ENCODE measurements at regions of chr5 and their contacts with region 1.

Region 1: DNA sequence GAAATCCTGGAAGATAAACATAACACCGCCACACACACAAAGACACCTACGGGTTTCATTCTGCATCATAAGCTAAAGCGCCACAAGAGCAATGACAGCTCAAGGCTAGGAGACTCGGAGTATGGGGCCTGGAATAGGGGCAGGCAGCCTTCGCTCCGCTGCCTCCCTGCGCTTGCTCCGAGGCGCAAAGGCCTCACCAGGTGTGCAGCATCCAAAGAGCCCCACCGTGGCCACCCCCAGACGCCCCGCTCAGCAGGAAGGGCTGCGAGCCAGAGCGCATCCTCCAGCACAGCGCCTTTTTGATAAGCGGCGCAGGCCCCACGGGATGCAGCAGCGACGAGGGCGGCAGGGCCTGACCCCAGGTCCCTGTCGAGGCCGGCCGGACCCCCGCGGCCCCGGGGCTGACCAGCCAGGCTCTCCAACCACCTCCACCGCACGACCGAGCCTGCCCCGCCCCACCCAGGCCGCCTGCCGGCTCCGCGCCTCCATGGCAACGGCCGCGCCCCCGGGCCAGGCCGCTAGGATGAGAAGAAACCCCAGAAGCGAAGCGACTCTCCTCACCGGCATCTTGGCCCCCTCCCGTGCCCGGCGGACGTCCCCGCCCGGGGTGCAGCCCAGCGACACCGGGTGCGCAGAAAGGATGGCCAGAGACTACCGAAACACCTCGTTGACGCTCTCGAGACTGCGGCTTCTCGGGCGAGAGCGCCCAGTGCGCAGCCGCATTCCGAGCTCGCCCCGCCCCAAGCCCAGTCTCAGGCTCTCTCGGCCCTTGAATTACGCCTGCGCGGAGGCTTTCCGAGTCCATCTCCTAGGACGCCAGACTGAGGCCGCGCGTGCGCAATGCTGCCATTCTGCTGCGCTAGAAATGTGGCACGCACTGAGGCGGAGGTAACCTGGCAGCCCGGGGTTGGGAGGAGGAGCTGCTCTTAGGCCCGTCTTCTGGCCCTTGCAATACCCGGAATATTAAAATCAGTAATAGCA is at the start of gene KIF3A:
- DNase-seq: peak; percentile 100
- H3K4me3 Mint-ChIP-seq: peak within 1 kb of the TSS; percentile 89
- H3K27ac Mint-ChIP-seq: peak within 1 kb of the TSS; percentile 29
- H3K4me1 Mint-ChIP-seq: peaks cover 38% of the 10 kb centered on the region
- H3K27me3 Mint-ChIP-seq: peaks cover 5% of the 10 kb centered on the region
- CTCF ChIP-seq: no peak
- total RNA-seq, gene KIF3A: 23.9 and 31.5 TPM in 2 replicates

Region 2: DNA sequence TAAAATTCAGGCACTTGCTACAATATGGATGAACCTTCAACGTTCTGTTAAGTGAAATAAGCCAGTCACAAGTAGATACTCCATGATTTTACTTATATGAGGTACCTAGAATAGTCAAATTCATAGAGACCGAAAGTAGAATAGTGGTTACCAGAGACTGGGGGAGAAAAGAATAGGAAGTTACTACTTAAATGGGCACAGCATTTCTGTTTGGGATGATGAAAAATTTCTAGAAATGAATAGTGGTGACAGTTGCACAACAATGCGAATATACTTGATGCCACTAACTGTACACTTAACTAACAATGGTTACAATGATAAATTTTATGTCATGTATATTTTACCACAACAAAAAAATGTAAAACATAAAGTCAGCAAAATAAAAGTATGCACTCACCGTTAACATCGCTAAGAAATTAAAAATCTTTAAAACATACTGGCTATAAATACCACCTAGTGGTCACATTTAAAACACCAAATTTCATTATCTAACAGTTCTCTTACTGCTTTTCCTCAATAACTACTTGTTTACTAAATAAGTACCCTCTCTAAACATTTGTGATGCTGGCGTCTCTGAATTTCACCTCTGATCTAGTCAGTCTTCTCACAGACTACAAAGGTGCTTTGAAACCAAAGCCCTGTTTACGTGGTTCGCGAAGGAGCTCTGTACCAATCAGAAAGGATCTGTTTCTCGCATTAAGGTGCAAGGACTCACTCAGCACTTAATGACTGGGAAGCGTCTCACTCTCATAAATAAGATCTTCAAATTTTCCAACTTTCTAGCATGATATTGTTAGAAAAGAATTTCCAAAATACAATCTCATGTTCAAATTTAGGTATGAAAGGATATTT is 22.5 kb before region 1 on chr5:
- CTCF ChIA-PET with region 1: interaction called, 13 read pairs
- POLR2A ChIA-PET with region 1: interaction called, 3 read pairs
- intact Hi-C with region 1: no loop called
- DNase-seq: no peak
- H3K4me3 Mint-ChIP-seq: no peak overlapping the region
- H3K27ac Mint-ChIP-seq: no peak overlapping the region
- H3K4me1 Mint-ChIP-seq: no peaks in the 10 kb centered on the region
- H3K27me3 Mint-ChIP-seq: no peaks in the 10 kb centered on the region
- CTCF ChIP-seq: peak; percentile 50

Region 3: DNA sequence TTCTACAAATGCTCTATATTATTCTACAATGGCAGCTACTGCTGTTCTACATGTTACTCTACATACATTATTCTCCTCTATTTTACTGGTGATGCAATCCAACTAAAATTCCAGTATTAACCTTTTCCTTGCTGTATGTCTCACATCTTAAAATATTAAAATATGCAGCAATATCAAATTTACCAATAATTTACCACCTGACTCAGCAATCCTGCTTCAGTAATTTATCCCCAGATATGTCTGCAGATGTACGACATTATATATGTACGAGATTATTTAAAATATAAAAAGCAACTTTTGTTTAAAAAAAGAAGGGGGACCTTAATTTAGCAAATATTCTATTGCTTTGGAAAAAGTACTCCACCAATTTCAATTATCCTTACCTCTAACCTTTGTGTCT is 11.4 kb before region 1 on chr5:
- CTCF ChIA-PET with region 1: interaction called, 4 read pairs
- POLR2A ChIA-PET with region 1: interaction called, 29 read pairs
- intact Hi-C with region 1: no loop called
- DNase-seq: no peak
- H3K4me3 Mint-ChIP-seq: no peak overlapping the region
- H3K27ac Mint-ChIP-seq: no peak overlapping the region
- H3K4me1 Mint-ChIP-seq: no peaks in the 10 kb centered on the region
- H3K27me3 Mint-ChIP-seq: no peaks in the 10 kb centered on the region
- CTCF ChIP-seq: no peak

Region 4: GRCh38 chr5:132753135-132753987 is 16.2 kb after region 1 on chr5:
- CTCF ChIA-PET with region 1: interaction called, 5 read pairs
- POLR2A ChIA-PET with region 1: interaction called, 10 read pairs
- intact Hi-C with region 1: no loop called
- DNase-seq: peak; percentile 37
- H3K4me3 Mint-ChIP-seq: no peak overlapping the region
- H3K27ac Mint-ChIP-seq: no peak overlapping the region
- H3K4me1 Mint-ChIP-seq: no peaks in the 10 kb centered on the region
- H3K27me3 Mint-ChIP-seq: no peaks in the 10 kb centered on the region
- CTCF ChIP-seq: peak; percentile 16

Region 5: GRCh38 chr5:132777209-132778069 is 40.3 kb after region 1 on chr5 and contains the start of gene SEPTIN8:
- CTCF ChIA-PET with region 1: no interaction called
- POLR2A ChIA-PET with region 1: interaction called, 15 read pairs
- intact Hi-C with region 1: loop called (anchors 1 kb)
- DNase-seq: peak; percentile 55
- H3K4me3 Mint-ChIP-seq: peak within 1 kb of the TSS; percentile 73
- H3K27ac Mint-ChIP-seq: peak within 1 kb of the TSS; percentile 28
- H3K4me1 Mint-ChIP-seq: peaks cover 32% of the 10 kb centered on the region
- H3K27me3 Mint-ChIP-seq: no peaks in the 10 kb centered on the region
- CTCF ChIP-seq: no peak
- total RNA-seq, gene SEPTIN8: 34.8 and 53.1 TPM in 2 replicates

Measured in MCF 10A (cell line).